ENCODE measurements at regions of chr20 and their contacts with region 1.

Region 1: DNA sequence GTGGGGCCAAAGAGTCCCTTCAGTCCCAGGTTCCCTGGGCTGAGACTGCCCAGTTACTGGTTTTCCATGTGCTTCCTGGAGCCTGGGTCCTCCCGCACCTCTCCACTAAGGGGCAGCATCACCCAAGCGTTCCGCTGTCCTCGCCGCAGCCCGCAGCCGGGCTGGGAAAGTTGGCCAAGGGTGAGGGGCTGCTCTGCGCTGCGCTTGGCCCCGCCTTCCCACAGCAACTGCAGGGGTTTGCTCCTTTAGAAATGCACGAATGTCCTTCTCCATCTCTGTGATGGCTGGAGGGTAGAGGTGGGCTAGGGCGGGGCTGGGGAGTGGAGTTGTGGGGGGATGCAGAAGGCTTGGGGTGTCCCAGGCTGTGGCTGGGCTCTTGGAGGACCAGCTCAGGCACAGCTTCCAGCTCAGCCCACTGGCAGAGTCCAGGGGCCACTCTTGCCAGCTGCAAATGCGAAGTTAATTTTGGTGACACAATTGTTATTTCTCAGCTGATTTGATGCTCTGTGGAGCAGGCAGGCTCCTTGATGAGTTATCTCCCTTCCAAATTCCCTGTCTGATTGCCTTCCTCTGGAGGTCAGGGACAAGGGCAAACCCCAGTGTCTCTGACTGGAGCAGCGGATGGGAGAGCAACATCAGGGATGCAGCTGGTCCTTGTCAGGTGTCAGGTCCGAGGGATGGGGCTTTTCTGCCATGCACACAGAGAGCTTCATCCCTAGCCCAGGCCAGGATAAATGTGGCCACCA is 63.2 kb downstream of the NOL4L start:
- DNase-seq: peak; percentile 64
- H3K4me3 ChIP-seq: no peak overlapping the region
- H3K27ac ChIP-seq: no peak overlapping the region
- H3K4me1 ChIP-seq: peaks cover 9 to 15% of the 10 kb centered on the region in 2 donors
- H3K27me3 ChIP-seq: no peaks in the 10 kb centered on the region
- CTCF ChIP-seq: peak; percentile 45 to 85 (median 76)
- POLR2A ChIP-seq: no peak

Region 2: GRCh38 chr20:32652739-32653526 is 131.0 kb after region 1 on chr20:
- intact Hi-C with region 1: loop called (anchors 2 kb)
- DNase-seq: peak; percentile 75 to 81
- H3K4me3 ChIP-seq: no peak overlapping the region
- H3K27ac ChIP-seq: no peak overlapping the region
- H3K4me1 ChIP-seq: peaks cover 0 to 3% of the 10 kb centered on the region in 2 donors
- H3K27me3 ChIP-seq: no peaks in the 10 kb centered on the region
- CTCF ChIP-seq: peak; percentile 85 to 97 (median 93)
- POLR2A ChIP-seq: no peak